Body of pancreas (tissue), 4 donors: ENCODE measurements at regions of chr2 and their contacts with region 1.

Region 1: DNA sequence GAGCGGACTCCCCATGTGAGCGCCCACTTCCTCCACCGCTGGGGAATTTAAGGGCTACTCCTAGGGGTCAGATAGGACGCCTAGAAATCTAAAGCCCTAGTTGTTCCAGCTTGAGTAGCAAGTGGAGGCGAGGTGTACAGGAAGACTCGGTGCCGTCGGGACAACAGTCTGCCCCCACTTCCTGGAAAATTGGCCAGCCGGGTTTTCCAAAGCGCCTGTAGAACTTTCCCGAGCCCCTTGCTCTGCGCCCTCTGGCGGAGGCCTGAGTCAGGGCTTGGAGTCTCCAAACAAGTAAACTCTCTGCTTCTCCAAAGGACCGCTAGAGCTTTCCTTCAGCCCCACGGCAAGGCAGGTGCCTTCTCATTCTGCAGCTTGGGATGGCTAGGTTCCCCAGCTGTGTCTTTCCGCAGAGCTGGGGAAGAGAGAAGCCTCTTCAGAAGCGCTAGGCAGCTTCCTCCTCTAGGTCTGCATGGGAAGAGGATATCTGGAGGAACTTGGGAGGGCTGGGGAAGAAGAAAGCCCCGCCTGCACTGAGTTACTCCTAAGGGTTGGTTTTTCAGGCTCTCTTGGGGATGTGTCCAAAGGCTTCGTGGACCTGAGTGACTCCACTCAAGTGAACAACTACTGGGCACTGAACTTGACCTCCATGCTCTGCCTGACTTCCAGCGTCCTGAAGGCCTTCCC is 688 bp downstream of the SPR start:
- DNase-seq: peak; percentile 92 to 93 (median 93)
- ATAC-seq: peak; percentile 83
- H3K4me3 ChIP-seq: peak overlapping the region; percentile 30 to 72
- H3K27ac ChIP-seq: peak overlapping the region; percentile 53 to 97 (median 96)
- H3K4me1 ChIP-seq: peaks cover 39% of the 10 kb centered on the region
- H3K27me3 ChIP-seq: no peaks in the 10 kb centered on the region
- CTCF ChIP-seq: peak; percentile 89 to 95 (median 92)
- POLR2A ChIP-seq: peak in 2 of 3 donors; percentile 44 to 57

Region 2: DNA sequence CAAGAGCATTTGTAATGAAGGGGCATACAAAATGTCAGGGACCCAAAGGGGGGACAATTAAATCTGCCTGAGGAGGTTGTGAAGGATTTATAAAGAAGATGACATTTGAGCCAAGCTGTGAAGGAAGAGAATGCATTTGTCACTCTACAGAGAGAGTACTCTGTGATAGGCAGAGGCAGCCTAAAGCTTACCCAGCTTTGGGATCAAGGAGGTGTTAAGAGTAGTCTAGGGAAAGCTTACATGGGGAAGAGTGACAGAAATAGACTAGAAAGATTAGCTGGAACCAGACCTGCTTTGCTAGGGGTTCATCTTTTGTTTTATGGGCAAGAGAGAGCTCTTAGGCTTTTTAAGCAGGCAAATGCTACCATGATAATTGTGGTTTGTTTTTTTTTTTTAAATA is 571.1 kb before region 1 on chr2:
- intact Hi-C with region 1: no loop called
- DNase-seq: no peak
- ATAC-seq: no peak
- H3K4me3 ChIP-seq: no peak overlapping the region
- H3K27ac ChIP-seq: no peak overlapping the region
- H3K4me1 ChIP-seq: no peaks in the 10 kb centered on the region
- H3K27me3 ChIP-seq: no peaks in the 10 kb centered on the region
- CTCF ChIP-seq: no peak
- POLR2A ChIP-seq: no peak

Region 3: DNA sequence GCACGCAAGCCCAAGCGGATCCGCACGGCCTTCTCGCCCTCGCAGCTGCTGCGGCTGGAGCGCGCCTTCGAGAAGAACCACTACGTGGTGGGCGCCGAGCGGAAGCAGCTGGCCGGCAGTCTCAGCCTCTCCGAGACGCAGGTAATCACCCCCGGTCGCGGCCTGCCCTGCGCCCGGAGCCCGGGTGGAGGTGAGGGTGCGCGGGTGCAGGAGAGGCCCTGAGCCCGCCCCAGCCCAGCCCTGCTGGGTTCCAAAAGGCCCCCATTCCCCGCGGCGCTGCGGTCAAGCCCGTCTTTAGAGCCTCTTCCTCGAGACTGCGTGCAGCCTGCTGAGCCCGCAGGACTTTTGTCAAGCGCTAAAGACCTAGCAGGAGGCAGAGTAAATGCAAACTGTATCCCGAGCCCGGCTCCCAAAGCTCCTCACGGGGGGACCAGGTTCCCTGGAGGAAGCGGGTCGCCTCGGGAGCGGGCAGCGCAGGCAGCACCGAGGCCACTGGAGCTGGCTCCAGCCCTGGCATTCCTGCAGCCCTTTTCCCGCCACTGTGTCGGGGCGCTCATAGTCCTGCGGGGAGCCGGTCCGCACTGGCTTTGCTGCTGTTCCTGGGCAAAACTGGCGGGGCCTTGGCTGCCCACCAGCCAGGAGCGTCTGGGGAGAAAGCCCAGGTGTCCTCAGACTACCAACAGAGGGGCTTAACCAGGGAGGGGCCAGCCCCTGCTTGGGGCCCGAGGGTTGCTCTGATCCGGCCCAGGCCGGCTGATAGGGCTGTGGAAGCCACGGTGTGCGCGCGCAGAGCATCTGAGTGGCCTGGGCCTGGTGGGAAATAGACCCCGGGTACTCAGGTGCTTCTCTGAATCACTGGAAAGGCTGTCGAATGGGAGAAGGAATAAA is 36.7 kb after region 1 on chr2:
- intact Hi-C with region 1: loop called (anchors 5 kb)
- DNase-seq: peak in 2 of 4 donors; percentile 15 to 17
- ATAC-seq: peak; percentile 41
- H3K4me3 ChIP-seq: no peak overlapping the region
- H3K27ac ChIP-seq: no peak overlapping the region
- H3K4me1 ChIP-seq: peaks cover 24% of the 10 kb centered on the region
- H3K27me3 ChIP-seq: peaks cover 7 to 41% of the 10 kb centered on the region in 2 donors
- CTCF ChIP-seq: no peak
- POLR2A ChIP-seq: no peak

Region 4: DNA sequence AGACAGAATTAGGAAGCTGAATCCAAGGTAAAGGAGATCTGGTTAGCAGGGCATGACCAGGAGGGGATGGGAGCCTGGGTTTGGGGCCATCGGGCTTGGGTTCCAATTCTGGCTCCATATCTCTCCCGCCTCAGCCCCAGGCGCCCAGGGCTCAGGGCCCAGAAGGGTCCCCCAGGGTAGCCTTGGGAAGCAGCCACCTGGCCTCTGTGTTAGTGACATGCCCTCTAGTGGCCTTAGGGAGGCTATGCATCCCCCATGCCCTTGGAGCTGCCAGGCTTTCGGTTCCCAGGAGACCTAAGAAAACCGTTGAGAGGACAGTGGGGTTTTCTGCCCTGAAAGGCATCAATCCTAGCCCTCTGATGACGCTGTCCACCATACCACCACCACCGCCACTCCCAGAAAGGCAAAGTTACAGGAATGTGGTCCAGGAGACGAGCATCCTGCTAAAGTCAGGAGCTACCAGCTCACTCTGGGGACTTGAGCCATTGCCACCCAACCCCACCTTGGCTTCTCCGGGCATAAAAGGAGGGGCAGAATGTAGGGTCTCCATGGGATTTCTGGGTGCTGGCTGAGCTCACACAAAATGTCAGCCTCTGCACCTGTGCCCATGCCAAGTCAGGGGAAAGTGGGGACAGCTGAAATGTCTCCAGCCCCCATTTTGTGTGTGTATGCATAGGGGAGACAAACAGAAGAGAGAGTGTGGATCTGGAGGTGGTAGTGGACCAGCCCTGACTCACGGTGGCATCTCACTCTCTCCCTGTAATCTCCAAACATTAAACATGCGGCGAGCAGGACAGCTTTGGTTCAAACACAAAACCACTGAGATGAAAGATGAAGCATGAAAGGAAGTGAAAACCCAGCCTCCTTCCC is 85.9 kb after region 1 on chr2:
- intact Hi-C with region 1: loop called (anchors 5 kb)
- DNase-seq: peak; percentile 59 to 71 (median 66)
- ATAC-seq: peak; percentile 81
- H3K4me3 ChIP-seq: no peak overlapping the region
- H3K27ac ChIP-seq: no peak overlapping the region
- H3K4me1 ChIP-seq: peaks cover 4% of the 10 kb centered on the region
- H3K27me3 ChIP-seq: no peaks in the 10 kb centered on the region
- CTCF ChIP-seq: peak; percentile 72 to 81 (median 76)
- POLR2A ChIP-seq: no peak

Region 5: DNA sequence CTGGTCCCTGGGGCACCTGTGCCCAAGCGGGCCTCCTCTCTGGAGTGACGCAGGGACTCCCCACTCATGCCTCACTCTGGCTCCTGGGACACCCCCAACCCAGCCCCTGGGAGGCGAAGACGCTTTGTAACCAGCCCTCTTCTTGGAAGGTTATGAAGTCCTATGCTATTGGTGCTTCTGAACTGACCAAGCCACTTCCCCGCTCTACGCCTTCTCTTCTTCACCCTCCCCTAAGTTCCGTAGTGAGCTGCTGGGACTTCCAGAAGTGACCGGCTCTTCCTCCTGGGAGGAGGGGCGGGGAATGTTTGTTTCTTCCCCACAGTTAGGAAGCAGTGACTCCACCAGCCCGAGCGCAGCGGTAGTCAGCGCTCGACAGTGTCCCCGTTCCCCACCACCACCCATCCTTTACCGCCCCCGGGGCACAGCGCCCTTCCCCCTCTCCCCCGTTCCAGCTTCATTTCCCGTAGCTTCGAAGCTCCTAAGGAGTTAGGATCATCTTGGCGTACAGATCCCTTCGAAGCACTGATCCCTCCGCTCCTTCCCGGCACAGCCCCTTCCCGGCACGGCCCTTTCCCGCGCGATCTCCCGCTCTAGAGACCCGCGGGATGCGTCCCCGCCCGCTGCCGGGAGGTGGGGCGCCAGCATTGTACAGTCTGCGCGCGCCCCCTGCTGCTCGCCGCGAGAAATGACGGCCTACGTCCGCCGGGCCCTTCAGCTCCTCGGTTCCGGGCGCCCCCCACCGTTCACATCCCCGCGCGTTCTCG is 289.2 kb after region 1 on chr2:
- intact Hi-C with region 1: loop called (anchors 10 kb)
- DNase-seq: peak; percentile 89 to 93 (median 90)
- ATAC-seq: peak; percentile 90
- H3K4me3 ChIP-seq: peak overlapping the region in 1 of 2 donors; percentile 3
- H3K27ac ChIP-seq: peak overlapping the region in 3 of 4 donors; percentile 7 to 38 (median 9)
- H3K4me1 ChIP-seq: peaks cover 27% of the 10 kb centered on the region
- H3K27me3 ChIP-seq: peaks cover 0 to 14% of the 10 kb centered on the region in 2 donors
- CTCF ChIP-seq: peak; percentile 94 to 99 (median 99)
- POLR2A ChIP-seq: peak in 2 of 3 donors; percentile 31 to 37